ENCODE measurements at regions of chr9 and their contacts with region 1.

Region 1: GRCh38 chr9:35657546-35658136 is at the start of gene RMRP:
- DNase-seq: peak; percentile 100
- H3K4me3 ChIP-seq: peak within 1 kb of the TSS; percentile 70 to 92 (median 76)
- H3K27ac ChIP-seq: peak within 1 kb of the TSS; percentile 97 to 98 (median 98)
- H3K4me1 ChIP-seq: peaks cover 0 to 52% (median 47%) of the 10 kb centered on the region in 4 donors
- H3K27me3 ChIP-seq: no peaks in the 10 kb centered on the region
- CTCF ChIP-seq: peak; percentile 42 to 62 (median 62)
- EP300 ChIP-seq: peak; percentile 70 to 99 (median 94)
- POLR2A ChIP-seq: peak; percentile 85 to 87
- total RNA-seq, gene RMRP: 2,523 to 26,387 (median 8,883) TPM

Region 2: GRCh38 chr9:34994260-34994899 is 663.3 kb before region 1 on chr9:
- intact Hi-C with region 1: loop called (anchors 10 kb)
- DNase-seq: no peak
- H3K4me3 ChIP-seq: peak overlapping the region in 2 of 4 donors; percentile 5 to 18
- H3K27ac ChIP-seq: peak overlapping the region in 3 of 4 donors; percentile 95 to 100 (median 98)
- H3K4me1 ChIP-seq: peaks cover 0 to 77% (median 72%) of the 10 kb centered on the region in 4 donors
- H3K27me3 ChIP-seq: no peaks in the 10 kb centered on the region
- CTCF ChIP-seq: peak; percentile 48 to 66 (median 60)
- EP300 ChIP-seq: no peak
- POLR2A ChIP-seq: no peak

Region 3: DNA sequence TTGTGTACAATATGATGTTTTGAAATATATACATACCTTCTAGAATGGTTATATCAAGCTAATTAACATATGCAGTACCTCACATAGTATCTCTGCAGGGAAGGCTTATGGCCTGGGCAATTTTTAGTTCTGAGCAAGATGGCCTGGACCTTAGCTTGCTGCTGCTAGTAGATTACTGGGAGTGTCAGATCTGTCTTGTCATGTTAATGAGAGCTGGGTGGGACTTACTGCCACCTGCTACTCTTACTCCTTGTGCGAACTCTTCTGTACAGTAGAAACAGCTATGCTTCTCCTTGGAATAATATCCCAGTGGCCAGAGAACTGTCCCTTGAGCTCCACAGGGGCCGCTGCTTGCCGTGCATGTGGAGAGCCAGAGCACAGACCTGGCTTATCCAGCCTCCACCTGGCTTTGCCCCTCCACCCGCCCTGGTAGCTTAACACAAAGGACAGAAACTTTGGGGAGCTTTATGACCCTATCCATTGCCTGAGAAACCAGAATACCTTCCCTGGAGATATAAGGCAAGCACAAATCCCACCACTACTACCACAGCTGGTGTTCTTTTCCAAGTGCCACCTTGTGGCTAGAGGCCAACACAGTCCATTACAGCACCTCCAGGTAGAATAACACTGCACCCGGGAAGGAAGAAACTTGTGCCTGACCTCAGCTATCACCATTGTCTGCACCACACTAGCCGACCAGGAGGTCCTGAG is 242.1 kb before region 1 on chr9:
- intact Hi-C with region 1: no loop called
- DNase-seq: no peak
- H3K4me3 ChIP-seq: no peak overlapping the region
- H3K27ac ChIP-seq: no peak overlapping the region
- H3K4me1 ChIP-seq: no peaks in the 10 kb centered on the region
- H3K27me3 ChIP-seq: no peaks in the 10 kb centered on the region
- CTCF ChIP-seq: no peak
- EP300 ChIP-seq: no peak
- POLR2A ChIP-seq: no peak

Region 4: DNA sequence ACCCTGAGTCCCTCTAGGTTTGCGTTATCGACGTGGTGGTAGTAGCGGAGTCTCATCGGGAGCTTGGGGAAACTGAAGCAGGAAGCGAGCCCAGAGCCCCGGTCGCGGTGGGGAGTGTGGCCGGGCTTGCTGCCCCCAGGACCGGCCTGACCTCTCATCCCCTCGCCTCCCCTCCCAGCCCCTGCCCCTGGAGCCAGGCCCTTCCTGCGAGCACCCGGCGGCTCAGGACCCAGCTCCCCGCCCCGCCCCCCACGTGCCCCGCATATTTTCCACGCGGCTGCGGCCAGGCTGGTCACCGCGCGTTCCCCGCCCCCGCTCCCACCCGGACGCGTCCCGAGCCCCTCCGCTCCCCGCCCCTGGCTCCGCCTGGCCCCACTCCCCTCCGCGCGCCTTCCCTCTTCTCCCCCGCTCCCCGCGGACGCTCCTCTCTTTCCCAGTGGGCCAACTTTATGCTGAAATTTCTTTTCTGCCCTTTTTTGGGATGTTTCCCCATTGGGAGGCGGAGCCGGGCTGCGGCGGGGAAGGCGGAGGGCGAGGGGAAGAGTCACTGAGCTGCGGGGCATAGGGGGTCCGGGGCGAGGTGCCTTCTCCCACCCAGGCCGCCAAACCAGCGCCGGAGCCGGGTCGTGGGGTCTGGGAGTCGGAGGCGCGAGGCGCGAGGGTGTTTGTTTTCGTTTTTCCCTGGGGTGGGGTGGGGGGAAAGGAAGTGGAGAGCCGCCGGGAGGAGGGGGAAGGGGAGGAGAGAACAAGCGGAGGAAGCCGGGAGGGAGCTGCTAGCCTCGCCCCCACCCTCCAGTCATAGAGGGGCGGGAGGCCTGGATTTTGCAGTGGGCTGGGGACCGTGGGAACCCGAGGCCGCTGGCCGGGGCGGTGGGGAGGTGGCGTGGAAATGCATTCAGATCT is 33.0 kb after region 1 on chr9:
- intact Hi-C with region 1: loop called (anchors 1 kb)
- DNase-seq: peak; percentile 97
- H3K4me3 ChIP-seq: peak overlapping the region; percentile 88 to 97 (median 94)
- H3K27ac ChIP-seq: peak overlapping the region; percentile 95 to 100 (median 98)
- H3K4me1 ChIP-seq: peaks cover 0 to 46% (median 22%) of the 10 kb centered on the region in 4 donors
- H3K27me3 ChIP-seq: no peaks in the 10 kb centered on the region
- CTCF ChIP-seq: no peak
- EP300 ChIP-seq: peak in 1 of 4 donors; percentile 38
- POLR2A ChIP-seq: peak; percentile 53 to 65

Region 5: GRCh38 chr9:35732122-35732799 is 74.6 kb after region 1 on chr9 and contains the starts of genes CREB3 and TLN1:
- intact Hi-C with region 1: loop called (anchors 1 kb)
- DNase-seq: peak; percentile 100
- H3K4me3 ChIP-seq: peak within 1 kb of the TSS; percentile 80 to 86 (median 82)
- H3K27ac ChIP-seq: peak within 1 kb of the TSS; percentile 97 to 99 (median 98)
- H3K4me1 ChIP-seq: peaks cover 0 to 64% (median 54%) of the 10 kb centered on the region in 4 donors
- H3K27me3 ChIP-seq: no peaks in the 10 kb centered on the region
- CTCF ChIP-seq: no peak
- EP300 ChIP-seq: peak in 2 of 4 donors; percentile 4 to 77
- POLR2A ChIP-seq: peak; percentile 73 to 91
- total RNA-seq, gene CREB3: 65.9 to 82.7 (median 75.4) TPM
- total RNA-seq, gene TLN1: 354 to 609 (median 525) TPM

Region 6: GRCh38 chr9:35814841-35815543 is 157.4 kb after region 1 on chr9 and contains the start of gene HINT2:
- intact Hi-C with region 1: loop called (anchors 2 kb)
- DNase-seq: peak; percentile 99
- H3K4me3 ChIP-seq: peak within 1 kb of the TSS; percentile 82 to 99 (median 98)
- H3K27ac ChIP-seq: peak within 1 kb of the TSS; percentile 98 to 100 (median 98)
- H3K4me1 ChIP-seq: peaks cover 0 to 36% (median 32%) of the 10 kb centered on the region in 4 donors
- H3K27me3 ChIP-seq: no peaks in the 10 kb centered on the region
- CTCF ChIP-seq: peak in 1 of 4 experiments; percentile 9
- EP300 ChIP-seq: no peak
- POLR2A ChIP-seq: peak; percentile 92 to 93
- total RNA-seq, gene HINT2: 23.5 to 42.8 (median 36.2) TPM

Region 7: DNA sequence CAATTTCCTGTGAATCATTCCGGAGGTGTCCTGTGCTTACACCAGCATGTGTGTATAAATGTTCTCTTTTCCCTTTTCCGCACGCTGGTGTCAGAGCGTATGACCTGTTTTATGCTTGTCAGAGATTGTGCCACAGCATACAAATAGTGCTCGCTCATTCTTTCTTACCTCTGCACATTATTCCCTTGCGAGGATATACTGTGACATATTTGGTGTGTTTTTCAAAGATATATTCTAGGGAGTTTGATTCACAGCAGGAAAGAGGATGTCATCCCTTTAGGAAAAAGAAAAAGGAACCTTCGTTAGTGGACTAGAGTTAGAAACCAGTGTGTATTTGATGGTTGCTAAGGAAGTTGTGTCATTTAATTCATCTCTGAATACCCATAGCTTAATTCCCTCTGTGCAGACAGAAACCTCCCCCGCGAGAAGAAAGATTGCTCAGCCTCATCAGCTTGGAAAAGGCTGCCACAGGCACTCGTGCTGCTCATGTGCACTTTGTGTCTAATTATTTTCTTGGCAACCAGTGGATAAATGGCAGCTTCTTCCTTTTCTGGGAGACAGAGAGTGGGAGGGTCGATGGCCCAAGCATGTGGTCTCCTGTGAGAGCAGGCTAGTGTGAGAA is 496.8 kb after region 1 on chr9:
- intact Hi-C with region 1: no loop called
- DNase-seq: peak; percentile 81
- H3K4me3 ChIP-seq: no peak overlapping the region
- H3K27ac ChIP-seq: peak overlapping the region; percentile 78 to 99 (median 82)
- H3K4me1 ChIP-seq: peaks cover 0 to 77% (median 67%) of the 10 kb centered on the region in 4 donors
- H3K27me3 ChIP-seq: no peaks in the 10 kb centered on the region
- CTCF ChIP-seq: no peak
- EP300 ChIP-seq: peak in 1 of 4 donors; percentile 59
- POLR2A ChIP-seq: no peak

Measured in sigmoid colon (tissue), 7 donors.